Activated CD4-positive, alpha-beta memory T cell treated with anti-CD3 and anti-CD28 coated beads for 36 hours (primary cell): ENCODE measurements at regions of chr9 and their contacts with region 1.

Region 1: DNA sequence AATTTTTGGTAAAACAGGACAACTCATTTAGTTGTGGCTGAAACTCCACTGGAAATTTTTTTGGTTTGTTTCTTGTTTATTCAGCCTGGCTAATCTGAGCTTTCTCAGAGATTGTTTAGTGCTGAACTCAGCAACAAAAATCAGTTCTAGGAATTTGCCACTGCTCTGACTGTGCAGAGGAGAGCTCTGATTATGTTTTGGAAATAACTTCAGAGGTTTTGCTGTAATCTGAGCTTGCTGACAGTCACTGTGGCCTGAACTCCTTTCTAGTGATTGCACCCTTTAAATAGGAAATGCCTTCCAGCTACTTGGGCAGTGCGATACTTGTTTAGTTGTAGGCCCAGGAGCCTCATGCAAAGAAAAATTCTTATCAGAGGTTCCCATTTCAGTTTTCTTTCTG is 60.2 kb downstream of the OSTF1 start:
- DNase-seq: peak; percentile 41
- H3K4me3 Mint-ChIP-seq: no peak overlapping the region
- H3K27ac Mint-ChIP-seq: peak overlapping the region; percentile 82
- H3K4me1 Mint-ChIP-seq: peaks cover 69% of the 10 kb centered on the region
- H3K27me3 Mint-ChIP-seq: no peaks in the 10 kb centered on the region

Region 2: GRCh38 chr9:74952281-74953151 is 196.0 kb before region 1 on chr9 and contains the start of gene C9orf40:
- CTCF ChIA-PET with region 1: no interaction called
- POLR2A ChIA-PET with region 1: interaction called, 4 read pairs
- intact Hi-C with region 1: loop called (anchors 5 kb)
- DNase-seq: peak; percentile 93
- H3K4me3 Mint-ChIP-seq: peak within 1 kb of the TSS; percentile 92
- H3K27ac Mint-ChIP-seq: peak within 1 kb of the TSS; percentile 88
- H3K4me1 Mint-ChIP-seq: peaks cover 22% of the 10 kb centered on the region
- H3K27me3 Mint-ChIP-seq: no peaks in the 10 kb centered on the region
- total RNA-seq, gene C9orf40: 17.6 to 18.3 TPM

Region 3: DNA sequence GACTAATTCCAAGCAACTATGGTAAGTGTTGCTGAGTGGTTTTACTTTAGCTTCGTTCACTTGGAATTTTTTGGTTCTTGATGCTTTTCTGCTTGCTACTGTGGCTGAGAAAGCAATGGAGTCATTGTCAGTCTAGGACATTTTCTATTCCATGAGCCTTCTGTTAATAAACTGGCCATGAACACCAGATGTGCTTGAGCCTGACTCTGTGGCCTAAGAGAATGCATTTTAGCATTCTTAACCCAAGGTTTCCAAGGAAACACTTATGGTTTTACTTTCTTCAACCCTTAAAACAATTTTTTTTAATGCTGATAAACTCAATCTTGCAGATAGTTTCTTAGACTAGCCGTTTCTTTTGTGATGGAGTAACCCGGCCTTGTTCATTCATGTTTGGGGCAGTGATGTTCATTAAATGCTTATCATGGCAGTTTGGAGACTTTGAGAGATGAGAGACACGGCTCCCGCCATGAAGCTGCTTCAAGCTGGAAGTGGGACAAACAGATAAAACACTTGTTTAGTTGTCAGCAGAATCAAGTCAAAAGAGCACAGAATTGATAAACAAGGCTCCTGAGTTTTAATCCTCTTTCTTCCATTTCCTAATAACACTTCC is 17.8 kb before region 1 on chr9:
- CTCF ChIA-PET with region 1: interaction called, 5 read pairs
- POLR2A ChIA-PET with region 1: interaction called, 4 read pairs
- intact Hi-C with region 1: loop called (anchors 1 kb)
- DNase-seq: no peak
- H3K4me3 Mint-ChIP-seq: no peak overlapping the region
- H3K27ac Mint-ChIP-seq: no peak overlapping the region
- H3K4me1 Mint-ChIP-seq: peaks cover 38% of the 10 kb centered on the region
- H3K27me3 Mint-ChIP-seq: no peaks in the 10 kb centered on the region

Region 4: GRCh38 chr9:75138260-75139040 is 10.1 kb before region 1 on chr9:
- CTCF ChIA-PET with region 1: interaction called, 3 read pairs
- POLR2A ChIA-PET with region 1: interaction called, 3 read pairs
- intact Hi-C with region 1: loop called (anchors 1 kb)
- DNase-seq: no peak
- H3K4me3 Mint-ChIP-seq: no peak overlapping the region
- H3K27ac Mint-ChIP-seq: peak overlapping the region; percentile 58
- H3K4me1 Mint-ChIP-seq: peaks cover 52% of the 10 kb centered on the region
- H3K27me3 Mint-ChIP-seq: no peaks in the 10 kb centered on the region